ENCODE measurements at regions of chr6 and their contacts with region 1.

Region 1: DNA sequence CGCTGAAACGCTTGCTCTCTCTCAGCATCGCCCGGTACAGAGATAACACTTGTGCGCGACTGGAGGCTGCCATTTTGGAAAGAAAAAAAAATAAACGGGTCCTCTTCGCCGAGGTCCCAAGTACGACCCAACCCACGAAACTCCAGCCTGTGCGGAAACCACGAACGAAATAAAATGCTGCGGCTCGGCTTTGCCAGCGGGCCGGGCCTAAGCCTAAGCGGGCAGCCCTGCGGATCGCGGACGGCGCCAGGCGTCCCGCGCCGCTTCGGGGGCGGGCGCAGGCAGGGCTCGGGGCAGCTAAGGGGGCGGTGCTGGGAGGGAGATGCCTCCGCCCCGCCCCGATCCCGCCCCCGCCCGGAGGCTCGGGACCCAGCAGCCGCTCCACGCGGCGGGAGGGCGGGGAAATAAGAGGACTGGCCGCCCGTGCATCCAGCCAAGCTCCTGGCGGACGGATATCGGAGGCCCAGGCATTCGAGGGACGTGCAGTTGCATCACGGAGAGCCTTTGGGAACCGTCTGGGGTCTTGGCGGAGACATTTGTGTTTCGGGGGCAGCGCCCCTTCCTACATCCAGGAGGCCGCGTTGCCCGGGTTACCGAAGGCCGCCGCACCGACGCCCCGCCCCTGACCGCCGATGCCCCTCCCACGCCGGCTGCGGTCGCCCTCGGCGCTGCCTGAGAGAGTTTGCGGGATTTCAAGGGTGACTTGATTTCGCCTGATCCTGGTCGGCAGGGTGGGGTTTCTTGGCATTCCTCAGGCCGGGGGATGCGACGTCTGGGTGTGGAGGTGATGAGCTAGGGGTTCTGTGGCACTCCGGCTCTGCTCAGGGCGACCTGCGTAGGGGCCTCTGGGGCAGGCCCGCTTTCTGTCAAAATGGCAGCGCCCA is at the starts of genes FARS2 and LYRM4:
- DNase-seq: peak; percentile 91
- H3K4me3 ChIP-seq: peak within 1 kb of the TSS; percentile 78 to 99 (median 86)
- H3K27ac ChIP-seq: peak within 1 kb of the TSS; percentile 94 to 98 (median 98)
- H3K4me1 ChIP-seq: peaks cover 0 to 24% (median 14%) of the 10 kb centered on the region in 4 donors
- H3K27me3 ChIP-seq: no peaks in the 10 kb centered on the region
- CTCF ChIP-seq: peak in 4 of 5 experiments; percentile 36 to 81 (median 62)
- EP300 ChIP-seq: no peak
- POLR2A ChIP-seq: no peak
- total RNA-seq, gene FARS2: 2.6 to 21.9 (median 15.0) TPM
- total RNA-seq, gene LYRM4: 3.0 to 14.0 (median 6.9) TPM

Region 2: DNA sequence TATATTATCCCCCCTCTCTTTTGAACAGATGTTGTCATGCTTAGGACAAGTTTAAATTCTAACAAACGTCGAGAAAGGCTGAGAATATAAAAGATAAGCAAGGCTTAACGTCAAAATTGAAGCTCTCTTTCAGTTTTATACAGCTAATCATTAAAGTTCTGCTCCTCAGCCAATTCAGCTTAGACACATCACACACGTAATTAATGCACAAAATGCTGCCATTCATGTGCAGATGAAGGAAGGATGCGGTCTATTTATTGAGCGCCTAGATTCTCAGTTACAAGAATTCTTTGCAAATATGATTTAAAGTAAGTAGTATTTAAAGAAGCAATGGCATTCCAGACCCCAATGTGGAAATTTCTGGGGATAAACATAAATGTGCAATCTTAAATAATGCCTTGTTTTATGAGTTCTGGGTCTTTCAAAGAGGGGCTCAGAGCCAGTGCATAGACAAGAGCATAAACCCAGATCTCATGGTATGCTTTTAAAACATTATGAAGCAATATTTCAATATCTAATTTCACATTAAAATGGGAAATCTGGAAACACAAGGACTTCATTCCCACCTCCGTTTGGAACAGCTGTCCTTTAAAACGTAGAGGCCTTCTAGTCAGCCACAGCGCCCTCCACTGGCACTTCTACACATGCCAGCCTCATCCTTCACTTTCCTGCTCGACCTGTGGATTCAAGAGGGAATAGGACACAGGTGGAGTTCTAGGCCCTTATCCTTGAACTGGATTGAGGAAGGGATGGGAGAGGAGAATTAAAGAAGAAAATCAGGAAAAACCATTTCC is 86.0 kb before region 1 on chr6:
- in situ Hi-C with region 1: no loop called
- intact Hi-C with region 1: no loop called
- DNase-seq: no peak
- H3K4me3 ChIP-seq: no peak overlapping the region
- H3K27ac ChIP-seq: peak overlapping the region in 2 of 4 donors; percentile 14 to 37
- H3K4me1 ChIP-seq: peaks cover 0 to 7% (median 3%) of the 10 kb centered on the region in 4 donors
- H3K27me3 ChIP-seq: no peaks in the 10 kb centered on the region
- CTCF ChIP-seq: peak in 2 of 5 experiments; percentile 9 to 12
- EP300 ChIP-seq: no peak
- POLR2A ChIP-seq: no peak

Region 3: DNA sequence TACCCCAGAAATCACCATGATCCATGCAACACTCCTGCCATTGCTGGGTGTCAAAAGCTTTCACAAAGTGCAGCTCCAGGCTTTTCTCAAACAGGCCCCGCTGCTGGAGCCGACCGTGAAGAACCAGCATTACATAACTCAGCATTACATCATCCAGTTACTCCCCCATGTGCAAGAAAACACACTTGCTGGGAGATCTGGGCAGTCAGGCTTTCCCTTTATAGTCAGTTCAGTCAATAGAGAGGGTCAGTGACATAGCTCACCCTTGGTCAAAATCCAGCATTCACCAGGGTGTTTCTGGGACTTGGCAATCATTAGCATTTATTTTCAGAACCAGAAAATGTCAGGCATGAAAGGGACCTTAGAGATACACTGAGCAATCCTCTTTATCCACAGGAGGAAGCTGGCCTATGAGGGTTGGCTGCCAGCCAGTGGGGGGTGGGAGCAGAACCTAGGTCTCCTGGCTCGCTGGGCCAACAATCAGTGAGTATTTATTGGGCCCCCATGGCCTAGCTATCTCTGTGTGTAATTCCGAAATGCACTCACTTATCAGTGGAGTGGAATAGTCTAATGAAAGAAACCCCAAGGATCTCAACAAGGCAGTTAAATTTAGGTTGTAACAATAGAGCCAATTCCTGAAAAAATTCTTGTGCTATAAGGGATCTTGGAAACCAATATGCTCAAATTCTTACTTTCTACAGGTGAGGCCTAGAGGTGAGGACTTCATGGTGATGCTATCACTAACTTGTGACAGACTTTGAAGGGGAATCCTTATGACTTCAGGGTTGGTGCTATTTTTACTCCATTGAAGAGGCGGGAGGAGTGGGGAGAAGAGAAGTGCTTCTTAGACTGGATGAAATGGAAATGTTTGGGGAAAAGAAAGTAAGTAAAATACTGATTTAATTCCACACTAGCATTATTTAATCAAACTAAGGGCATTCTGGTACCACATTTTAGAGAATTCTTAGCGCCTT is 54.7 kb before region 1 on chr6:
- in situ Hi-C with region 1: no loop called
- intact Hi-C with region 1: loop called (anchors 10 kb)
- DNase-seq: peak; percentile 11
- H3K4me3 ChIP-seq: no peak overlapping the region
- H3K27ac ChIP-seq: peak overlapping the region; percentile 11 to 74 (median 56)
- H3K4me1 ChIP-seq: peaks cover 6 to 26% (median 9%) of the 10 kb centered on the region in 4 donors
- H3K27me3 ChIP-seq: no peaks in the 10 kb centered on the region
- CTCF ChIP-seq: no peak
- EP300 ChIP-seq: no peak
- POLR2A ChIP-seq: no peak